MCF 10A (cell line): ENCODE measurements at regions of chr7 and their contacts with region 1.

Region 1: GRCh38 chr7:31648288-31648687 is 38.7 kb upstream of the PPP1R17 start:
- DNase-seq: peak; percentile 5
- H3K4me3 Mint-ChIP-seq: no peak overlapping the region
- H3K27ac Mint-ChIP-seq: no peak overlapping the region
- H3K4me1 Mint-ChIP-seq: no peaks in the 10 kb centered on the region
- H3K27me3 Mint-ChIP-seq: peaks cover under 1% of the 10 kb centered on the region
- CTCF ChIP-seq: peak; percentile 20

Region 2: GRCh38 chr7:30284298-30285066 is 1363.8 kb before region 1 on chr7 and contains the start of gene ZNRF2:
- CTCF ChIA-PET with region 1: no interaction called
- POLR2A ChIA-PET with region 1: no interaction called
- intact Hi-C with region 1: no loop called
- DNase-seq: peak; percentile 99
- H3K4me3 Mint-ChIP-seq: peak within 1 kb of the TSS; percentile 76
- H3K27ac Mint-ChIP-seq: peak within 1 kb of the TSS; percentile 89
- H3K4me1 Mint-ChIP-seq: peaks cover 20% of the 10 kb centered on the region
- H3K27me3 Mint-ChIP-seq: no peaks in the 10 kb centered on the region
- CTCF ChIP-seq: peak; percentile 66
- total RNA-seq, gene ZNRF2: 9.8 and 10.2 TPM in 2 replicates

Region 3: GRCh38 chr7:31735991-31736982 is 88.0 kb after region 1 on chr7:
- CTCF ChIA-PET with region 1: interaction called, 16 read pairs
- POLR2A ChIA-PET with region 1: no interaction called
- intact Hi-C with region 1: loop called (anchors 1 kb)
- DNase-seq: peak; percentile 81
- H3K4me3 Mint-ChIP-seq: no peak overlapping the region
- H3K27ac Mint-ChIP-seq: no peak overlapping the region
- H3K4me1 Mint-ChIP-seq: peaks cover 6% of the 10 kb centered on the region
- H3K27me3 Mint-ChIP-seq: peaks cover 24% of the 10 kb centered on the region
- CTCF ChIP-seq: peak; percentile 86